Aorta (tissue), 5 donors: ENCODE measurements at regions of chr18 and their contacts with region 1.

Region 1: DNA sequence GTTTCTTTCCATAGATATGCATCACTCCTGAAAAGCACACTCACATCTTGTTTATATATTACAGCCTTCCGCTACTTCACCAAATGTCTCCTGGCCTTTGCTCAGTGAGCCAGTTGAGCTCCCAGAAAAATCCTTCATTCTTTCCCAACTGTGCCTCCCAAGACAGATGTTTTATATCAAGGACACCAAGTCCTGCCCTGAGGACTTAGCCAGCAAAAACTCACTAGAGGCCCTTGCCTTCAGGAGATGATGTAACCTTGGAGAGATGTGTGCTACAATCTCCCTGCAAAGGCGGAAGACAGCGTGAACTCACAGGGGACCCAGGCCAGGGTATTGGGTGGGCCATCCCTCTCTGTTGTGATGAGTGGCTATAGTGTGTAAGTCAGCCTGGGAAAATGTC is 86.1 kb upstream of the CTAGE1 start:
- DNase-seq: no peak
- ATAC-seq: peak; percentile 63
- H3K4me3 ChIP-seq: no peak overlapping the region
- H3K27ac ChIP-seq: no peak overlapping the region
- H3K4me1 ChIP-seq: no peaks in the 10 kb centered on the region
- H3K27me3 ChIP-seq: no peaks in the 10 kb centered on the region

Region 2: GRCh38 chr18:22542401-22542835 is 38.6 kb after region 1 on chr18:
- intact Hi-C with region 1: loop called (anchors 2 to 5 kb)
- DNase-seq: peak; percentile 79
- ATAC-seq: peak; percentile 66
- H3K4me3 ChIP-seq: no peak overlapping the region
- H3K27ac ChIP-seq: peak overlapping the region in 1 of 2 donors; percentile 97
- H3K4me1 ChIP-seq: peaks cover 8 to 14% of the 10 kb centered on the region in 2 donors
- H3K27me3 ChIP-seq: no peaks in the 10 kb centered on the region